ENCODE measurements at regions of chr15 and their contacts with region 1.

Region 1: GRCh38 chr15:101127506-101128076 is 124.3 kb downstream of the CHSY1 start:
- DNase-seq: peak; percentile 73
- H3K4me3 Mint-ChIP-seq: peak overlapping the region; percentile 53
- H3K27ac Mint-ChIP-seq: peak overlapping the region; percentile 94
- H3K4me1 Mint-ChIP-seq: peaks cover 53% of the 10 kb centered on the region
- H3K27me3 Mint-ChIP-seq: peaks cover 4% of the 10 kb centered on the region

Region 2: DNA sequence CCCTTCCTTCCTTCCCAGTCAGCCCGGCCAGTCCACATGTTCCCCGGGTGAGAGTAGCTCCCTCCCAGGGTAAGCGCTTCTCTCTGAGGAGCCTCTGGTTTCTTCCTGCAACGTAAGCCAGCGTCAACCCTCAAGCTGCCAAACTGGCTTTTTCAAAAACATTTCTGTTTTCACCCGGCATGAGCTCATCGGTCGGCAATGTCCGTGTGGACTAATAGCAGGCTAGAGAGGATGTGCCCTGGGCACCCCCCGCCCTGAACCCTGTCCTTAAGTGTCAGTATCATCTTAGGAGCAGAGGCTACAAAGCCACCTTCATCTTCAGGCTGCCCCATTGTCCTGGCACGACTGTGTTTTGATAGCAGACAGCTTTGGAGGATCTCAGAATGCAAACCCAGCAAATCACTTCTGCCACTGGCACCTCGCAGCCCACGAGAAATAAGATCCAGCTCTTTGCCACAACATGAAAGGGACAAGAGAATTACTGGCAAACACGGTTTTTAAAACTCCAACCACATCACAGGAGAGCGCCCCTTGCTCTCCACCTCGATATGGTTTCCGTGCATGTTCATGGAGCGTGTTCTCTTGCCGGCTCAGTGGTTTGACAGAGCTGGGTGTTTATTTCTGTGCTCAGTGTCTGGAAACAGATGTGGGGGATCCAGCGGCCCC is 238.1 kb before region 1 on chr15:
- CTCF ChIA-PET with region 1: no interaction called
- intact Hi-C with region 1: no loop called
- DNase-seq: no peak
- H3K4me3 Mint-ChIP-seq: no peak overlapping the region
- H3K27ac Mint-ChIP-seq: no peak overlapping the region
- H3K4me1 Mint-ChIP-seq: peaks cover 5% of the 10 kb centered on the region
- H3K27me3 Mint-ChIP-seq: peaks cover 63% of the 10 kb centered on the region

Region 3: DNA sequence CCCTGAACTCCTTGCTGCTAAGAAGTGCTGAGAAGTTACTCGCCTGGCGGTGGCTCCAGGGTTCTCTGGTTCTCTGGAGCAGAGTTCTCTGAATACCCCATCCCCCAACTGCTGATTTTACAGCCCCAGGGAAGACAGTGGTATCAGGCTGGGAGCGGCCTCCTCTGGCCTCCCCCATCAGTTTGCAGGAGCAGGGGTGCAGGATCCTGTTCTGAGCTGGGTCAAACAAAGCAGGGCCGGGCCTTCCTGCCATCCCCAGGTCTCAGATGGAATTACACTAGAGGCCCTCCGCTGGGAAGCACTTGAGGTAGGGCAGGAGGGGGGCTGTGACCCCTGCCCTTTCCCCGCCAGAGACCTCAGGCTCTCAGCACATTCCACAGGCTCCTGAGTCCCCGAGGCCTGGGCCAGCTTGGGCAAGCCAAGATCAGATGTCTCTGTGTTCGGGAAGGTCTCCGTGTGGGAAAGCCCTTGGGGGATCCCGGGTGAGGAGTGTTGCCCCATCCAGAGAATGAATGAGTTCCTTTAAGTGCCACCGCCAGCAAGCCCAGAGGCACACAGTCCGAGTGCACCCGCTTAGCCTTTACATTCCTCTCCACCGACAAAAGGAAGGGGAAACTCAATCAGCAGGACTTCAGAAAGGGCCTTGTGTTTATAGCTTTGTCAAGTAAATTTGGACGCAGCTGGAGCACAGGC is 58.5 kb before region 1 on chr15:
- CTCF ChIA-PET with region 1: no interaction called
- intact Hi-C with region 1: no loop called
- DNase-seq: no peak
- H3K4me3 Mint-ChIP-seq: no peak overlapping the region
- H3K27ac Mint-ChIP-seq: no peak overlapping the region
- H3K4me1 Mint-ChIP-seq: peaks cover 11% of the 10 kb centered on the region
- H3K27me3 Mint-ChIP-seq: no peaks in the 10 kb centered on the region

Region 4: DNA sequence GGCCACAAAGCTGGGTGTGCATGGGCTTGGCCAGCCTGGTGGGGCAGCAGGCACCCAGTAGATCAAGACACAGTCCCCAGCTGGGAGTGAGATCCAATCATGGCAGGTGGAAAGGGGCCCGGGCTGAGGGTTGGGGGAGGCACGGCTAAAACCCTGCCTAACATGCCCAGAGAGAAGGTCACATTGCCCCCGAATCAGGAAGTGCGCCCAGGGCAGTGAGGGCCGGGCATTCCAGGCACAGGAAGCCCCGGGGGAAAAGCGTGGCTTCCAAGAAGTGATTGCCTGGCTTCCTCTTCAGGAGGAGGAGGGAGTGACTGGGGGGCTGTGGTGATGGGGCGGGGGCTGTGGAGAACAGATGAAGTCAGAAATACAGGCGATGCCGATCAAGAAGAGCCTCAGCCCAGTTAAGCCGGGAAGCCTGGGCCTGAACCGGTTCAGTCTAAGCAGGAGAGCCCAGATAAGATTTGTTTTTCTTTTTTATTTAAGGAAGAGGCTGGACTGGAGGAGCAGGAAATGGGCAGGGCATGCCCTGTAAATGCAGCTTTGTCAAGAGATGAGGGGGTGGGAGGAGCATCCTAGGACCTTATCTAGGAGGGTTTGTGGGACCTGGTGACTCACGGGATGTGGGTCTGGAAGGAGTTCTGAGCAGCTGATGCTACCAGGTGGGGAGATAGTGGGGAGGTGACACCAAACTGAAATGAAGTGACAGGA is 40.3 kb after region 1 on chr15:
- CTCF ChIA-PET with region 1: interaction called, 4 read pairs
- intact Hi-C with region 1: loop called (anchors 2 kb)
- DNase-seq: peak; percentile 93
- H3K4me3 Mint-ChIP-seq: peak overlapping the region; percentile 58
- H3K27ac Mint-ChIP-seq: peak overlapping the region; percentile 88
- H3K4me1 Mint-ChIP-seq: peaks cover 23% of the 10 kb centered on the region
- H3K27me3 Mint-ChIP-seq: no peaks in the 10 kb centered on the region

Region 5: DNA sequence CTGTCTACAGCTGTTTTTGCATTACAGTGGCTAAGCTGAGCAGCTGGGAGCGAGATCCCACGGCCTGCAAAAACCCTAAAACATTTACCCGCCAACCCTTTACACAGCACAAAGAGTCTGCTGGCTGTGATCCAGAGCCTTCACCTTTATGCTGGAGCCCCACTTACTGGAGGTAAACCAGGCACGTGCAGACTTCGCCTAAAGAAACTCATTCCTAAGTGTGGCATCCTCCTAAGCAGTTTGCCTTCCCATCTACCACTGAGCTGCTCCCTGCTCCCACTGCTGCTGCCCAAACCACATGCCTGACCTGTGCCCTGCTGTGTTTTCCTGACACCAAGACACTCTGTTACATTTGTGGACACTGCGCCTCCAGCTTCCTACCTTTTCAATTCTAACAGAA is 71.2 kb after region 1 on chr15:
- CTCF ChIA-PET with region 1: no interaction called
- intact Hi-C with region 1: loop called (anchors 1 kb)
- DNase-seq: no peak
- H3K4me3 Mint-ChIP-seq: peak overlapping the region; percentile 48
- H3K27ac Mint-ChIP-seq: peak overlapping the region; percentile 85
- H3K4me1 Mint-ChIP-seq: peaks cover 81% of the 10 kb centered on the region
- H3K27me3 Mint-ChIP-seq: no peaks in the 10 kb centered on the region

Region 6: DNA sequence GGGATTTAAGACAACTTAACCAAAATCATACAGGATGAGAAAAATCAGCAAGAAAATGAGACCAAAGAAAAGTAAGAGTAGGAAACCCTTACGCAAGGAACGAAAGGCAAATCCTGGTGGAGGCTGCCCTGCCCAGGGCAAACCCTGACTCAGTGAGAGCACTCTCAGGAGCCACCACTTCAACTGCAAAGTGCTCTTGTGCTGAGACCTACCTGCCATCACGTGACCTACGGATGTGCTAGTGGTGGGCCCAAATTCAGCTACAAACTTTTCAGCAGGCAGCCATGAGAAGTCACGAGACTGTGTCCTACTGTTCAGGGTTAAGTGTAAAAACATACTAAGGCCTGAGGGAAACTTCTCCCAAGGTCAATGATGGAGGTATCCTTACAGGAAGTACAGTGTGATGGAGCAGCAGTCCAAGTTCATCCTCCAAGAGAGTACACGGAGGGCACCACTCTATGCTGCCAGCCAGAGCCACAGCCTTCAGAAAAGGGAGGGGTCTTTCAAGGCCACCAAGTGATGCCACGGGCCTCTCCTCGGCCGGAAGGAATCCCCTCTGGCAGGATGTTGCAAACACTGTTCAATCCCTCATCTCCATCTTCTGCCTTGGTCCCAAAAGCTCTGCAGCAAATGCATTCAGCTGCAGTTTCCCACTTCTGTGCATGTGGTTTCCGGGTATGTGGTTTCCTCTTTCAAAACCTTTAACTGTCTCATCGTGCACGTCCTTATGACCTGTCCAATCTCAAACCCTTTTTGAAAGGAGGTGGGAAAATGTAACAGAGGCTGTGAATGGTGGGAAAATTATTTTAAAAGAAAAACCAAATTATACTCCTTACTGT is 114.8 kb after region 1 on chr15:
- CTCF ChIA-PET with region 1: interaction called, 3 read pairs
- intact Hi-C with region 1: loop called (anchors 2 kb)
- DNase-seq: peak; percentile 81
- H3K4me3 Mint-ChIP-seq: no peak overlapping the region
- H3K27ac Mint-ChIP-seq: peak overlapping the region; percentile 76
- H3K4me1 Mint-ChIP-seq: peaks cover 79% of the 10 kb centered on the region
- H3K27me3 Mint-ChIP-seq: no peaks in the 10 kb centered on the region